ENCODE measurements at regions of chr11 and their contacts with region 1.

Region 1: DNA sequence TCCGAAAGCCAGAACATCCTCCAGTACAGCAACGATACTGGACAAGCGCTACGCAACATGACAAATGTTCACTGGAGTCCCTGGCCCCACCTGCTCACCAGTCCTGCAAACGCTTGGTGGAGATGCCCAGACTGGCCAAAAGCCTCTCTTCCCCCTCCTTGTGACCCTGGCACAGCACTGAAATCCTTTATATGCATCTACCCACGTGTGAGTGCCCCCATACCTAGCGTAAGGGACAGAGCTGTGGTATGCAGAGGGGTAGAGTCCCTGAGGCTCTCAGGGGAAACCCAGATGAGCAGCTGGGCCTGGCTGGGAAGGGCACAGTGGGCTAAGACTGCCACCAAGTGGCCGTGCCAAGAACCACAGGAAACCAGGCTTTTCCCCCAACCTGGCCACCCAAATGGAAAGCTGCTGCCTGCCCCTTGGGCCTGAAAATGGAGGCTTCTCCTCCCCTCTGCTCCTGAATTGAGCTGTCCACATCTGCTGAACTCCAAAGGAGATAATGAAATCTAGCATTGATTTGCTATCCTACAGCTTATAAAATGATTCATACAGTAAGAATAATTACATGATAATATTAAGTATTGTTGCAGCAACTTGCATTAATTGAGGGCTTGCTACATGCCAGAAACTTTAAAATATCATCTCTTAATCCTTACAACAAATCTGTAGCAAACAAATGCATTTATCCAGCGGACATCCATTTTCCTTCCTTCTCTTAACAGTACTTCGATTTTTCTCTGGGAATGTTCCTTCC is 24.8 kb upstream of the TTC12 start:
- DNase-seq: peak; percentile 63 to 78
- ATAC-seq: peak; percentile 92 to 100 (median 100)
- H3K4me3 ChIP-seq: no peak overlapping the region
- H3K4me3 Mint-ChIP-seq: no peak overlapping the region
- H3K27ac ChIP-seq: no peak overlapping the region
- H3K27ac Mint-ChIP-seq: no peak overlapping the region
- H3K4me1 ChIP-seq: no peaks in the 10 kb centered on the region
- H3K4me1 Mint-ChIP-seq: no peaks in the 10 kb centered on the region
- H3K27me3 ChIP-seq: no peaks in the 10 kb centered on the region
- H3K27me3 Mint-ChIP-seq: peaks cover 13 to 28% of the 10 kb centered on the region in 2 donors
- CTCF ChIP-seq: peak; percentile 95

Region 2: GRCh38 chr11:112588252-112588694 is 701.3 kb before region 1 on chr11:
- intact Hi-C with region 1: loop called (anchors 1 kb)
- DNase-seq: peak in 1 of 2 donors; percentile 72
- ATAC-seq: peak; percentile 61 to 93 (median 68)
- H3K4me3 ChIP-seq: no peak overlapping the region
- H3K4me3 Mint-ChIP-seq: no peak overlapping the region
- H3K27ac ChIP-seq: no peak overlapping the region
- H3K27ac Mint-ChIP-seq: no peak overlapping the region
- H3K4me1 ChIP-seq: no peaks in the 10 kb centered on the region
- H3K4me1 Mint-ChIP-seq: no peaks in the 10 kb centered on the region
- H3K27me3 ChIP-seq: no peaks in the 10 kb centered on the region
- H3K27me3 Mint-ChIP-seq: peaks cover 9% of the 10 kb centered on the region in 2 donors
- CTCF ChIP-seq: peak; percentile 78

Region 3: DNA sequence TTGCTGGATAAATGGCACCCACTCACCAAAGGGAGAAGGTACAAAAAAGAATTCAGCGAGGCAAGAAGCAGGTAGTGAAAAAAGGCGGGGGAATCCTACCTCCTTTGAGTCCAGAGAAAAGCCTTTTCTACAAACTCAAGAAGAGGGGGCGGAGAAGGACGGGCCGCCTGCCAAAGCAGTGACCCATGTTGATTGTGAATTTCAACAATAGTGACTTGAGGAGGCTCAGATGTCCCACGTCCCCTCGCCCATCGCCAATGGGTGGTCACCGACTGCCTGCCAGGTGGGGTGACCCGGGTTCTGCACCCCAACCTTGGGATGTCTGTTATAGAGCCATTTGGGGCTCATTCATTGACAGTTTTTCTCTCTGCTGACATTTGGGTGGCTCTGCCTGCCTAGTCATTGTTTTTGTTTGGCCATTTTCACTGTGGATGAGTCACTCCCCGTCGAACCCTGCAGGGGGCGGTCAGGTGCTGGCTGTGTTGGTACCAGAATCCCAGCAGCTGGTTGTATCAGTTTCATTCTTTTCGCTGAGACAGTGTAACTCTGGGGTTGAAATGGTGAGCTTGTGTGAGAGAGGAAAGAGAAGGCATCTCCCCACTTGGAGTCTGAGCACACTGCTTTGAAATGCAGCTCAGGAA is 491.8 kb before region 1 on chr11:
- intact Hi-C with region 1: loop called (anchors 1 kb)
- DNase-seq: peak; percentile 39 to 61
- ATAC-seq: peak; percentile 81 to 97 (median 96)
- H3K4me3 ChIP-seq: no peak overlapping the region
- H3K4me3 Mint-ChIP-seq: peak overlapping the region; percentile 73
- H3K27ac ChIP-seq: no peak overlapping the region
- H3K27ac Mint-ChIP-seq: peak overlapping the region in 1 of 2 donors; percentile 37
- H3K4me1 ChIP-seq: peaks cover 7% of the 10 kb centered on the region
- H3K4me1 Mint-ChIP-seq: peaks cover 7 to 12% of the 10 kb centered on the region in 2 donors
- H3K27me3 ChIP-seq: no peaks in the 10 kb centered on the region
- H3K27me3 Mint-ChIP-seq: peaks cover 0 to 10% of the 10 kb centered on the region in 2 donors
- CTCF ChIP-seq: peak; percentile 80